ENCODE measurements at regions of chr3 and their contacts with region 1.

Region 1: DNA sequence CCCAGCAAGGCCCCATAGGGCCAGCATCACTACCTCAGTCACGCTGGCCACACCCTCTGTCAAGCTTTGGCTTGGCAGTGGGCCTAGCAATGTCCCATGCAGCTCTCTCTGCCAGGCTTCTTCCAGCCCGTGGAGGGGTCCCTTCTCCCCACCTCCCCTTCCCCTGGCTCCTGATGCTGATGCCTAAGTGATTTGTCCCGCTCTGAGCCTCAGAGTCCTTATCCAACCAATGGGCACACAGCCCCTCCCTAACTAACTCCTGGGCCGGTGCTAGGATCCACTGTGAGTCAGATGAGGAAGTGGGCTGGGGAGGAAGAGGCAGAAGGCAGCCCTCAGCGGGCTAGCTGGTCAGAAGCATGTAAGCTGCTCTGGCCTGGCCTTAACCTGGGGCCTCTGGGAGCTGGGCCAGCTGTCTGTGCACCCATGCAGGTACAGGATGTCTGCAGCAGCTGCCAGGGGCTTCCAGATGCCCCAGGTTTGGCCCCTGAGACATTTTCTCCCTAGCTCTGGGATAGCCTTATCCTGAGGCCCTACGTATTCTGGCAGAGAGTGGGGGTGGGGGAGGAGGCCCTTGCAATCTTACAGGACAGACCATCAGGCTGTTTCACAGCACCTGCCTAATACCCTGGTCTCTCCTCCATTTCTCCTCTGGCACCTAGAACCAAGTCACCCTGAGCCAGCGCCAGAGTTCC is 740 bp upstream of the ZBTB47 start:
- DNase-seq: peak in 4 of 10 donors; percentile 50 to 93 (median 82)

Region 2: DNA sequence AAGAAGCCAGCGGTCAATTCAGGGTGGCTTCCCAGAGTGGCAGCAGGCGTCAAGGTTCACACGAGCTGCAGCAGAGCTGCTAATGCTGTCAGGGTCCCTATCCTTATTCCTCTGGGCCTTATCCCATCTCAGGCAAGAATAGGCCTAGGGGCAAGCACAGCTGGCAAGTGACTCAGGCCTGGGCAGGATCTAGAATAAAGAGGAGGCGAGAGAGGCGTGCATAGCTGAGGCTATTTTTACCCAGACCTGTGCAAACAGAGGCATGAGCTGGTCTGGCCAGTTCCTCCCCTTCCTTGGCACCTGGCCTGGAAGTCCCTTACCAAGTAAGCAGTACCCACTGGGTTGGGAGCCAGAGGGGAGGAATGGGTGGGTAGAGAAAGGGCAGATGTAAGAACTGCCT is 162.5 kb before region 1 on chr3:
- intact Hi-C with region 1: no loop called
- DNase-seq: peak in 1 of 10 donors; percentile 53

Region 3: DNA sequence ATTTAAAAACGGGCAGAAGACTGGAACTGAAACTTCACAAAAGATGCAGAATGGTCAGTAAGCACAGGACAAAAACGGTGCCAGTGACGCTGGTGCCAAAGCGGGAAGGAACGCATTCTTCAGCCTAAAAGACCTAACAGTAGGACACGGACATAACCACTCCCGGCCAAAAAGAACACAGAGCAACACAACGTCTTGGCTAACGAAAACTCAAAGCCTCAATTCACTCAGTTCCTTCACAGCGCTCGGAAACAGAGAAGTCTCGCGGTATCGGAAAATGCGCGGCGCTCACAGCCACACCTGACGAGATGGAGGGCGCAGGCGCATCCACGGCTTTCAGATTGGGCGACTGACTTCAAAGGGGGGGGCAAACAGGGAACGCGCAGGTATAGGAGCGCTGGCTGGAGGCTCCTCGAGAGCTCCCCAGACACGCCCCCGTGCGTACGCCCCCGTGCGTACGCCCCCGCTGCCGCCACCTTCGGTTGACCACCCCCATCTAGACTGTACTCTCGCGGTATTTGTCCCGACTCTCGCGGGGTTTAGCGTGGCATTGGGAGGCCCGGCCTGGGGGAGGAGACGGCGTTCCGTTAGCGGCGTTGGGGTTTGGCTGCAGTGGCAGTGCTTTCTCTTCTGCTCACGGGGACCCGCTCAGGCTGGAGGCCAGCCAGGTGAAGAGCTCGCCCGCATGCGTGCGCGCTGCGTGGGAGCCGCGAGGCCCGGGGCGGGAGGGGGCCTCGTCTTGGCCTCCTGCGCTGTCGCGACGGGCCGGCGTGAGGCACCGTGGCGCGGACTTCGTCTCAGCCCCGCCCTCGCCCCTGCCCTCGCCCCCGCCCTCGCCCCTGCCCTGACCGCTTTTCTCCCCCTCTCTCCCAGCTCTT is 52.4 kb before region 1 on chr3 and contains the start of gene NKTR:
- intact Hi-C with region 1: loop called (anchors 5 kb)
- DNase-seq: peak; percentile 85 to 99 (median 94)